Activated CD8-positive, alpha-beta memory T cell treated with anti-CD3 and anti-CD28 coated beads, Interleukin-2, amount 10 ng/mL, durations not matched to agents 7 days and 5 days (primary cell): ENCODE measurements at regions of chr15 and their contacts with region 1.

Region 1: DNA sequence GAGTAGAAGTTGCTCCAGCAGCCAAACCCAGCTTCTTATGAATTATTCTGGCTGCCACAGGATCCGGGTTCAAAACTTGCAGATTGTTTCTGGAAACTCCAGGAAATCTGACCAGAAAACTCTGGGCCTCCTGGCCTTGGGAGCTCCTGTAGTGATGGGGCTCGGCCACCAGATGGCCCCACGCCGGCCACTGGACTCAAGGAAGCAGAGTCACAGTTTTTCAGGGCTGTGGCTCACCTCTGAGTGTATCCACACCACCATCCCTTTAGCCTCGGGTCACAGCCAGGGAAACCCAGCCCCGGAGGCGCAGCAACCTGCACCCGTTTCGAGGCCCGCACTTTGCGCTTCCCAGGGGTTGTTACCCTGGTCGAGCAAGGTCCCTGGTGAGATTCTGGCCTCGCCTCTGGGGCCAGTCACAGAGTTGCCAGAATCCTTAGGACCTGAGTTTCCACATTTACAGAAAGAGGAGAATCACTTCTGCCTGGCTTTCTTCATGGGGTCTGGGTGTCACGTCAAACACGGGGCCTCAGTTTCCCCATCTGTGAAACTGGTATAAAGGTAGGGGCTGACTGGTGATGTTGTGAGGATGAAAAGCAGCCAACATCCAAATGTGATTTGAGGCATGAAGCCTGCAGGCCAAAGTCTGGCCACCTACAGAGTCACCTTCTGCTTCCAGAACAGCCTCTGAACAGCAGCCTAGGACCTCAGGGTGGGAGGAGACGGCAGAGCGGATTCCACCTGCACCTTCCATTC is 53.5 kb upstream of the LCTL start:
- DNase-seq: peak; percentile 59
- ATAC-seq: no peak
- H3K4me3 Mint-ChIP-seq: no peak overlapping the region
- H3K27ac Mint-ChIP-seq: no peak overlapping the region
- H3K4me1 Mint-ChIP-seq: peaks cover 9% of the 10 kb centered on the region
- H3K27me3 Mint-ChIP-seq: peaks cover 30% of the 10 kb centered on the region

Region 2: GRCh38 chr15:66603301-66604179 is 15.8 kb before region 1 on chr15:
- CTCF ChIA-PET with region 1: interaction called, 11 read pairs
- DNase-seq: peak; percentile 70
- ATAC-seq: peak; percentile 79
- H3K4me3 Mint-ChIP-seq: no peak overlapping the region
- H3K27ac Mint-ChIP-seq: no peak overlapping the region
- H3K4me1 Mint-ChIP-seq: peaks cover under 1% of the 10 kb centered on the region
- H3K27me3 Mint-ChIP-seq: peaks cover 2% of the 10 kb centered on the region

Region 3: DNA sequence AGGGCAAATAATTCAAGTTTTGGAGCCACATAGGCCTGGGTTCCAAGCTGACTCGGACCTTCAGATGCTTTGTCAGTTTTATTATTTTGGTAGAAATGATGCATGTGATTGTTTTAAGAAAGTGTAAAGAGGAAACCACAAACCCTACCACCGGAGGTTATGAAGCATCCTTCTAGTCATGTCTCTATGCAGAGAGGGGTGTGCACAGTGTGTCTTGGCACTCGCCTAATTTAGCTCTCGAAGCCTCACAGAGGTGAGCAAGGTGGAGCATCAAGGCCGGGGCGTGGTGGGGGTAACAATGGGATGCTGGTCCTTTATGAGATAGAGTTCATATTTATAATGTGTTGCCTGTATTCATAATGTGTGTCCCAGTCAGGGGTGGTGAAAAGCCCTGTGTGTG is 19.1 kb after region 1 on chr15:
- CTCF ChIA-PET with region 1: interaction called, 13 read pairs
- DNase-seq: peak; percentile 68
- ATAC-seq: peak; percentile 96
- H3K4me3 Mint-ChIP-seq: no peak overlapping the region
- H3K27ac Mint-ChIP-seq: no peak overlapping the region
- H3K4me1 Mint-ChIP-seq: peaks cover 10% of the 10 kb centered on the region
- H3K27me3 Mint-ChIP-seq: peaks cover 2% of the 10 kb centered on the region

Region 4: GRCh38 chr15:66673410-66674322 is 54.3 kb after region 1 on chr15:
- CTCF ChIA-PET with region 1: no interaction called
- DNase-seq: peak; percentile 57
- ATAC-seq: peak; percentile 47
- H3K4me3 Mint-ChIP-seq: no peak overlapping the region
- H3K27ac Mint-ChIP-seq: no peak overlapping the region
- H3K4me1 Mint-ChIP-seq: peaks cover 10% of the 10 kb centered on the region
- H3K27me3 Mint-ChIP-seq: no peaks in the 10 kb centered on the region

Region 5: DNA sequence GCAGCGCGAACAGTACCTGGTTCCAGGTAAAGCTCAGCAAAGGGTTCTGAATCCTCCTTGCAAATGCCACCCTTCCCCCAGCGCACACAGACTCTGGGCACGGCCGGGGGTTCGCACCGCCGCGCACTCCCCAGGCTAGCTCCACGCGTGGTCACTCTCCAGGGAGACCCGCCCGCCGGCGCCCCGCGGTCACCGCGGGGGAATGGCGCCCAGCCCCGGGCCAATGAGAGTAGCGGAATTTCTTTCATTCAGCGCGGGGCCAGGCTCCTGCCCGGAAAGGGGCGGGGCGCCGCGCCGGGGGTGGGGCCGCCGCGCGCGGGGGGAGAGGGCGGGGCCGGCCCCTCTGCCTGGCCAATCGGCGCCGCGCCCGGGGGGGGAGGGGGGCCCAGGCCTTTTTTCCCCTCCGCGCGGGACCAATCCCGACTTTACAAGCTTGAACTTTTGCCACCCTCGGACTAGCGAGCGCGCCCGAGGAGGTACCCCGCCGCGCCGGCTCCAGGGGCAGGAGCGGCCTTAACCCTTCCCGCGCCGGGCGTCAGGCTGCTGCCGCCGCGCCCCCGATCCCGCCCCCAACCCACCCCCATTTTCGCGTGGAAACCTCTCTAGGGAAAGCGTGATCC is 81.6 kb after region 1 on chr15:
- CTCF ChIA-PET with region 1: interaction called, 11 read pairs
- DNase-seq: peak; percentile 86
- ATAC-seq: peak; percentile 85
- H3K4me3 Mint-ChIP-seq: peak overlapping the region; percentile 78
- H3K27ac Mint-ChIP-seq: peak overlapping the region; percentile 75
- H3K4me1 Mint-ChIP-seq: peaks cover 17% of the 10 kb centered on the region
- H3K27me3 Mint-ChIP-seq: peaks cover 28% of the 10 kb centered on the region